Adrenal gland (tissue), 19 donors: ENCODE measurements at regions of chr7 and their contacts with region 1.

Region 1: DNA sequence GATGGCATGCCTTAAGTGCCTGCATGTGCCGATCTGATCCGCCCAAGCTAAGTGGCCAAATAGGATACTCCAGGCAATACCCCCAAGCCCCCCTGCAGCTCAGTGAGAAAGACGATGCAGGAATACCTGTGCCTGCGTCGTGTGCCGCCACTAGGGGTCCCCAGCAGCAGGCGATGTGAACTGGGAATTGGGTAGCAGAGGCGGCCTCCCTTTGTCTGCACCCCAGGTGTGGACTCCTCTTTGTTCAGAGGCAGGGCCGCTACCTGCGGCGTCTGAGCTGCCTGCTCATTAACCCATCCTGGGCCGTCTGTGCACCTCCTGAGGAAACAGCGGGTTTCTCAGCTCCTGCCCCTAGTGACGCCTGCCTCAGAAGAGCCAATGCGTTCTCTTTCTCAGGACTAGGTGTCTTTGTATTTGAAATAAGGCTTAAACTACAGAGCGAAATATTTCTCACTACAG is 4.8 kb upstream of the CHN2 start:
- DNase-seq: peak; percentile 50 to 74 (median 65)
- H3K4me3 ChIP-seq: peak overlapping the region in 1 of 4 donors; percentile 36
- H3K27ac ChIP-seq: no peak overlapping the region
- H3K4me1 ChIP-seq: peaks cover 0 to 3% of the 10 kb centered on the region in 2 donors
- H3K27me3 ChIP-seq: no peaks in the 10 kb centered on the region
- CTCF ChIP-seq: peak; percentile 73 to 87 (median 82)
- POLR2A ChIP-seq: no peak

Region 2: GRCh38 chr7:29319719-29320521 is 130.1 kb after region 1 on chr7:
- intact Hi-C with region 1: loop called in 1 of 2 experiments (anchors 10 kb)
- DNase-seq: peak in 2 of 7 donors; percentile 22 to 29
- H3K4me3 ChIP-seq: no peak overlapping the region
- H3K27ac ChIP-seq: peak overlapping the region in 1 of 5 donors; percentile 25
- H3K4me1 ChIP-seq: peaks cover 0 to 13% of the 10 kb centered on the region in 2 donors
- H3K27me3 ChIP-seq: no peaks in the 10 kb centered on the region
- CTCF ChIP-seq: no peak
- POLR2A ChIP-seq: no peak

Region 3: GRCh38 chr7:29343399-29343798 is 153.6 kb after region 1 on chr7:
- intact Hi-C with region 1: loop called in 1 of 2 experiments (anchors 5 kb)
- DNase-seq: peak in 1 of 7 donors; percentile 6
- H3K4me3 ChIP-seq: no peak overlapping the region
- H3K27ac ChIP-seq: no peak overlapping the region
- H3K4me1 ChIP-seq: no peaks in the 10 kb centered on the region
- H3K27me3 ChIP-seq: no peaks in the 10 kb centered on the region
- CTCF ChIP-seq: no peak
- POLR2A ChIP-seq: no peak

Region 4: DNA sequence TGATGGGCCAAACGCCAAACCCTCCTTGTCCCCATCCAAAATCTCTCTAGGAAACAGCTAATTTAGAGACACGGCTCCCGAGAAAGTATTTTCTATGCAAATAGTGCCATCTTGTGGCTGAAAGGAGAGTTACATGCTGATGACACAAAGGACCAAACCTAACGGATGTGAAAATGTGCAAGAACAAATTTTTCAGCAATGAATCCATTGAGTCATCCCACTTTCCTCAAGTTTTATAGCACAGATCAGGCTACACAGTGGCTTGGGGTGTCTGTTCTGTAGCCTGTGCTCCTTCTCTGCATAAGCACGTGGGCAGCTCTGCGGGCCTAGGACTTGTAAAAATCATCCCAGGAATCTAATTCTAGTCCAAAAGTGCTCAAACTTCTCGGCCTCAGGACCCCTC is 219.1 kb after region 1 on chr7:
- intact Hi-C with region 1: loop called (anchors 2 to 5 kb)
- DNase-seq: peak; percentile 40 to 81 (median 70)
- H3K4me3 ChIP-seq: no peak overlapping the region
- H3K27ac ChIP-seq: no peak overlapping the region
- H3K4me1 ChIP-seq: no peaks in the 10 kb centered on the region
- H3K27me3 ChIP-seq: no peaks in the 10 kb centered on the region
- CTCF ChIP-seq: peak; percentile 81 to 94 (median 89)
- POLR2A ChIP-seq: no peak